Activated B cell treated with CpG ODN at 0.5 μM for 24 hours (primary cell): ENCODE measurements at regions of chr10 and their contacts with region 1.

Region 1: GRCh38 chr10:92592761-92593618 is at the start of gene KIF11:
- DNase-seq: peak; percentile 92
- ATAC-seq: peak; percentile 85
- H3K4me3 Mint-ChIP-seq: peak within 1 kb of the TSS; percentile 96
- H3K27ac Mint-ChIP-seq: peak within 1 kb of the TSS; percentile 99
- H3K4me1 Mint-ChIP-seq: peaks cover 36% of the 10 kb centered on the region
- H3K27me3 Mint-ChIP-seq: no peaks in the 10 kb centered on the region
- CTCF ChIP-seq: no peak
- total RNA-seq, gene KIF11: 2.2 and 2.5 TPM in 2 replicates

Region 2: DNA sequence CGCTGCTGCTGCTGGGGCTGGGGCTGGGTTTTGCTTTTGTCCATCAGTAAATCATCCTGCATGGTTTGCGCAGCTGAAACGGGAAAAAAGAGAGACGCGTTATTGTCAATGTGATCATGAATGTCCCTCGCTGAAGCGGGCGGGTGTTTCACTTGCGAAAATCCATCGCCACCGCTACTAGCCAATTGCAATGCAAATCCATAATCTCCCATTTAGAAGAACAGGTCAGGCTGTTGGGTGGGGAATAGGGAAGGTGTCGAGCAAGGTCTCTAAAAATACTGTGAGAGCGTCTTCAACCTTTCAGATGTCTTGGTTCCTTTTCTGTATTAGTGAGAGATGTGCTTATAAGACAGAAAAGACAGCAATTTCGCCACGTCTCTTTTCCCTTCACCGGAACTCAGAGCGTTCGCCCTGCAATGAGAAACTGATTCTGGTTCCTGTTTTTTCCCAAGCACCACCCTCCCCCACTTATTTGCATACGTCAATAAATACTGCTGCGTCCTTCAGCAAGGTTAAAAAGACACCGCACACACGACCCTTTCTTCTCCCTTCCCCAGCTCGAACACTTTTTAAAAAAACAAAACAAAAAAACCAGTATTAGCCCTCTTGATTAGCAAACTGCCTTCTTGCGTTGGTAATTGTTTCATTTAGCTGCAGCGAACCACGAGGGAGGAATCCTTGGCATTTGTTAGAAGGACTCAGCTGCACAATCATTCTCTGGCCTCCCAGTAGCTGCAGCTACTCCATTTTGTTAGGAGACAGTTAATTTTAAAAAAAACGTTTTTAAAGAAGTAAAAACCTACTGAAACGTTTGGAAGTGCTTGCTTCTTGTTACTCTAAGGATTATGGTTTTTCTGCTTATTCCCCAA is 352.5 kb before region 1 on chr10:
- CTCF ChIA-PET with region 1: no interaction called
- POLR2A ChIA-PET with region 1: no interaction called
- intact Hi-C with region 1: loop called (anchors 1 kb)
- DNase-seq: peak; percentile 32
- ATAC-seq: peak; percentile 66
- H3K4me3 Mint-ChIP-seq: peak overlapping the region; percentile 96
- H3K27ac Mint-ChIP-seq: peak overlapping the region; percentile 85
- H3K4me1 Mint-ChIP-seq: peaks cover 39% of the 10 kb centered on the region
- H3K27me3 Mint-ChIP-seq: no peaks in the 10 kb centered on the region
- CTCF ChIP-seq: no peak

Region 3: GRCh38 chr10:92298487-92298886 is 294.5 kb before region 1 on chr10:
- CTCF ChIA-PET with region 1: no interaction called
- POLR2A ChIA-PET with region 1: no interaction called
- intact Hi-C with region 1: no loop called
- DNase-seq: no peak
- ATAC-seq: no peak
- H3K4me3 Mint-ChIP-seq: no peak overlapping the region
- H3K27ac Mint-ChIP-seq: no peak overlapping the region
- H3K4me1 Mint-ChIP-seq: peaks cover 27% of the 10 kb centered on the region
- H3K27me3 Mint-ChIP-seq: no peaks in the 10 kb centered on the region
- CTCF ChIP-seq: no peak

Region 4: DNA sequence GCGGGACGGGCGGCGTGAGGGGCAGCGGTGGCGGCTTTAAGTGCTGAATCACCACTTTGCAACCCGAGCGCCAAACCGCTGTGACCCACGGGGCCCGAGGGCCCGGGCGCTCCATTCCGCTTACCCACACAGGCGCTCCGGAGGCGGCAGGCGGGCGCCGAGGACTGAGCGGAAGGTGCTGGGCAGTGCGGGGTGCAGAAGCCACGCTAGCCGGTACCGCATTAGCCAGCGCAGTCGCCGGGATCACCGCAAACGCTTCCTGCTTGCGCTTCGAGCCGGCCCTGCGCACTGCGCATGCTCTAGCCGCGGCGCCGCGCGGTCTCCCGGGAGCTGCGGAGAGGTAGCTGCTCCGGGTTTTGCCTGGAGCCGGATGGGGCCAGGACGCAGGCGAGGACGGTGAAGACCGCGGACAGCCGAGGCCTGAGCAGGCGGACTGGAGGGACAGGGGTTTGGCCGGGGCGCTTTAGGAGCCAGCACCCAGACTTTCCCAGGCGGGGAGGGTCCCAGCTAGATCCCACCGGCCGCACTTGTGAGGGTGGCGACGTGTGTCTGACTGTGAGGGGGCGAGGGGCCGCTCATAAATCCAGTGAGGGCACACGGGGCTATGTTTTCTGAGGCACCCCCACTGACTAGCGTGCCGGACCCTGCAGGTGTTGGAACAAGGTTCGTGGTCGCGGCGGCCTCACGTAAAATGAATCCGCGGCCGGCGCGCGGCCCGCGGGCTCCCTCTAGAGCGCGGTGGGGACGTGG is 19.0 kb before region 1 on chr10 and contains the start of gene IDE:
- CTCF ChIA-PET with region 1: interaction called, 9 read pairs
- POLR2A ChIA-PET with region 1: interaction called, 49 read pairs
- intact Hi-C with region 1: loop called (anchors 1 kb)
- DNase-seq: peak; percentile 84
- ATAC-seq: peak; percentile 76
- H3K4me3 Mint-ChIP-seq: peak within 1 kb of the TSS; percentile 88
- H3K27ac Mint-ChIP-seq: peak within 1 kb of the TSS; percentile 85
- H3K4me1 Mint-ChIP-seq: peaks cover 40% of the 10 kb centered on the region
- H3K27me3 Mint-ChIP-seq: no peaks in the 10 kb centered on the region
- CTCF ChIP-seq: no peak
- total RNA-seq, gene IDE: 37.7 and 39.2 TPM in 2 replicates

Region 5: GRCh38 chr10:92699518-92700381 is 106.8 kb after region 1 on chr10:
- CTCF ChIA-PET with region 1: no interaction called
- POLR2A ChIA-PET with region 1: interaction called, 6 read pairs
- intact Hi-C with region 1: loop called (anchors 2 kb)
- DNase-seq: peak; percentile 46
- ATAC-seq: peak; percentile 64
- H3K4me3 Mint-ChIP-seq: peak overlapping the region; percentile 88
- H3K27ac Mint-ChIP-seq: peak overlapping the region; percentile 85
- H3K4me1 Mint-ChIP-seq: peaks cover 72% of the 10 kb centered on the region
- H3K27me3 Mint-ChIP-seq: no peaks in the 10 kb centered on the region
- CTCF ChIP-seq: no peak

Region 6: GRCh38 chr10:92790440-92790839 is 197.4 kb after region 1 on chr10:
- CTCF ChIA-PET with region 1: interaction called, 4 read pairs
- POLR2A ChIA-PET with region 1: interaction called, 19 read pairs
- intact Hi-C with region 1: no loop called
- DNase-seq: no peak
- ATAC-seq: peak; percentile 47
- H3K4me3 Mint-ChIP-seq: peak overlapping the region; percentile 63
- H3K27ac Mint-ChIP-seq: peak overlapping the region; percentile 92
- H3K4me1 Mint-ChIP-seq: peaks cover 45% of the 10 kb centered on the region
- H3K27me3 Mint-ChIP-seq: no peaks in the 10 kb centered on the region
- CTCF ChIP-seq: no peak

Region 7: DNA sequence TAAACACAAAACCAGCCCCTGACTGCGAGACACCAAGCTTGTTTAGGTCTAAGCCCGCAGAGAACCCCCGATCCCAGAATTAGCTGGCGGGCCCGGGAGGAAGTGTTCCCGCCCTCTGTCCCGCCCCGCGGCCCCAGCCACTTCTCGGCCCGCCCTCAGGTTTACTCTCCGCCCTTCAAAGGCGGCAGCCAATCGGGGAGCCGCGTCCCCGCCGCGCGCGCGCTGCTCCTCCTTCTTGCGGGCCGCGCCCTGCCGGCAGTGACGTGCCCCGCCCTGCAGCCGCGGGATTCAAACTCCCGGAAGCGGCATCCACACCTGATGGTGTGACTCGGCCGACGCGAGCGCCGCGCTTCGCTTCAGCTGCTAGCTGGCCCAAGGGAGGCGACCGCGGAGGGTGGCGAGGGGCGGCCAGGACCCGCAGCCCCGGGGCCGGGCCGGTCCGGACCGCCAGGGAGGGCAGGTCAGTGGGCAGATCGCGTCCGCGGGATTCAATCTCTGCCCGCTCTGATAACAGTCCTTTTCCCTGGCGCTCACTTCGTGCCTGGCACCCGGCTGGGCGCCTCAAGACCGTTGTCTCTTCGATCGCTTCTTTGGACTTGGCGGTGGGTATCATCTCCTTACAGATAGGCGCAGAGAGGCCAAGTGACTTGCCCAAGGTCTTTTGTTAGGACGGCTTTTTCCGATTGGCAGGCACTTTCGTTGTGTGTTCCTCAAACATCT is 903.5 kb after region 1 on chr10 and contains the start of gene CEP55:
- CTCF ChIA-PET with region 1: no interaction called
- POLR2A ChIA-PET with region 1: no interaction called
- intact Hi-C with region 1: loop called (anchors 1 kb)
- DNase-seq: peak; percentile 94
- ATAC-seq: peak; percentile 100
- H3K4me3 Mint-ChIP-seq: peak within 1 kb of the TSS; percentile 92
- H3K27ac Mint-ChIP-seq: peak within 1 kb of the TSS; percentile 74
- H3K4me1 Mint-ChIP-seq: peaks cover 16% of the 10 kb centered on the region
- H3K27me3 Mint-ChIP-seq: no peaks in the 10 kb centered on the region
- CTCF ChIP-seq: no peak
- total RNA-seq, gene CEP55: 0.95 and 1.6 TPM in 2 replicates